ENCODE measurements at regions of chr22 and their contacts with region 1.

Region 1: DNA sequence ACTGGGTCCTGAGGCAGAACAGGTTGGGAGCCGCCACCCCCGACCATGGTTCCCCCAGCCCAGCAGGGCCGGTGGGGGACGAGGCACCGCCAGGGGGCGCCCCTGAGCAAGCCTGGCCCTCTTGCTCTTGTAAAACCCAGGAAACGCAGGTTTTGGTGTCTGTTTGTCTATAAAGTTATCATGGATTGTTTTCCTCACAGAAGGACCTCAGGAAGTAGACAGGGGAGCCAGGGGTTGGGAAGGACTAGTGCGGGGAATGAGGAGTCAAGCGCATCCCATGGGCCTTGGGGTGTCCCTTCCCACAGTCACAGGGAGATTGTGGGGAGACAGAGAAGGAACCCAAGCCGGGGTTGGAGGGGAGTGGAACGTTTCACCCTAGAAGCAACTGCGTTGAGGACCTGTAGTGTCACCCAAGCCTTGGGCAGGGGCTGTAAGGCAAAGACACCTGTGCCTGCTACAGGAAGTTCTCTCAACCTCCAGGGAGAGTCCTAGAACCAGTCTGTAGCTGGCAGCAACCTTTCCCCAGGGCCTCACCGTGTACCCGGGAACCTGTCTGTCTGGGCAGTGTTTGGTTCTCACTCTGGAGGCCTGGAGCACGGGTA is 26.4 kb downstream of the KCTD17 start:
- DNase-seq: peak; percentile 59 to 84 (median 82)
- ATAC-seq: peak; percentile 37 to 59
- H3K4me3 ChIP-seq: no peak overlapping the region
- H3K27ac ChIP-seq: no peak overlapping the region
- H3K4me1 ChIP-seq: no peaks in the 10 kb centered on the region
- H3K27me3 ChIP-seq: no peaks in the 10 kb centered on the region

Region 2: DNA sequence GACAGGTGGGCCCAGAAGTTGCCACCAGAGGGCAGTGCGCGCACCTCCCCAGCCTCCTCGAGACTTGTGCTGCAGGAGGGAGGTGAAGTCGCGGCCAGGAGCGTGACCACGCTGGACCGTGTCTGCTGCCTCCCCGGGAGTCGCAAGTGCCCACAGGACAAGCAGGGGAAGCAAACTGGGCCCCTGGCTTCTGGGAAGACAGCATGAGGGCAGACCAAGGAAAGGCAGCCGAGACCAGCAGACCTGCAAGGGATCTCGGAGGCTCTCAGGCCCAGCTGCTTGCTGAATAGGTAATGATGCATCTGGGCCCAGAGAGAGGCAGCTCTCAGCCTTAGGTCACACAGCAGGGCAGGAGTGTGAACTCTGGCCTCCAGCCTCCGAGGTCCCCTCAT is 88.7 kb after region 1 on chr22:
- intact Hi-C with region 1: loop called in 1 of 4 experiments (anchors 10 kb)
- DNase-seq: peak; percentile 89 to 96 (median 95)
- ATAC-seq: peak; percentile 90 to 92
- H3K4me3 ChIP-seq: no peak overlapping the region
- H3K27ac ChIP-seq: no peak overlapping the region
- H3K4me1 ChIP-seq: peaks cover 2% of the 10 kb centered on the region
- H3K27me3 ChIP-seq: no peaks in the 10 kb centered on the region

Region 3: DNA sequence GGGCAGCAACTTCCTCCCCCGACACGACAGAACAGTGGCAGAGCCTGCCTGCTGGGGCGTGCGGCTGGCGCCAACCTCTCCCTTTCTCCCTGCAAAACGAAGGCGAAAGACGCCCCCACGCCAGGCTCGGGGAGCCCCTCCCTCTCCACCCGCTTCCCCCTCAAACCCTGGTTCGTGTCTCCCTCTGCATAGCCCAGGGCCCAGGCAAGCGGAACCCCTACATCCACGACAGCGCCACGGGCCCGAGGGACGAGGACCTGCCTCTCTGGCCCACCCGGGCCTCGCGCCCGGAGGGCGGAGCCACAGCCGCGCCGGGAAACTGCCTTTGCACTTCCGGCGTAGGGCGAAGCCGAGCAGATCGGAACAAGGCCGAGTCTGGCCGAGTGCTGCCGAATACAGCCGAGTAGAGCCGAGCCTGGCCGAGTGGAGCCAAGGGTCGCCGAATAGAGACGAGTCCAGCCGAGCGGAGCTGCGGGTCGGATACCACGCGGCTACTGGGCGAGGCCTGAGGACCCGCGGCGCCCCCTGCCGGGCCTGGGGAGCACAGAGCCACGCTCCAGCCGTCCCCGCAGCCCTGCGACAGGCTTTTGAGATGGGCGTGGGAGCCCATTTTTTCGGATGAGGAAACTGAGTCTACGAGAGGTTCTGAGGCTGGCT is 121.2 kb after region 1 on chr22:
- intact Hi-C with region 1: loop called in 3 of 4 experiments (anchors 2 to 10 kb)
- DNase-seq: peak; percentile 98 to 100 (median 100)
- ATAC-seq: peak; percentile 93 to 94
- H3K4me3 ChIP-seq: peak overlapping the region; percentile 56
- H3K27ac ChIP-seq: peak overlapping the region; percentile 97
- H3K4me1 ChIP-seq: peaks cover 22% of the 10 kb centered on the region
- H3K27me3 ChIP-seq: no peaks in the 10 kb centered on the region

Region 4: GRCh38 chr22:37267135-37267587 is 189.2 kb after region 1 on chr22:
- intact Hi-C with region 1: loop called in 1 of 4 experiments (anchors 10 kb)
- DNase-seq: peak in 2 of 3 donors; percentile 76 to 81
- ATAC-seq: peak; percentile 75 to 82
- H3K4me3 ChIP-seq: peak overlapping the region; percentile 5
- H3K27ac ChIP-seq: no peak overlapping the region
- H3K4me1 ChIP-seq: no peaks in the 10 kb centered on the region
- H3K27me3 ChIP-seq: no peaks in the 10 kb centered on the region